AG04450 (cell line): ENCODE measurements at regions of chr2 and their contacts with region 1.

Region 1: GRCh38 chr2:105255979-105256738 is 14.6 kb downstream of the GPR45 start:
- DNase-seq: no peak
- H3K4me3 ChIP-seq: no peak overlapping the region
- H3K27ac ChIP-seq: no peak overlapping the region
- H3K27me3 ChIP-seq: no peaks in the 10 kb centered on the region
- CTCF ChIP-seq: no peak

Region 2: DNA sequence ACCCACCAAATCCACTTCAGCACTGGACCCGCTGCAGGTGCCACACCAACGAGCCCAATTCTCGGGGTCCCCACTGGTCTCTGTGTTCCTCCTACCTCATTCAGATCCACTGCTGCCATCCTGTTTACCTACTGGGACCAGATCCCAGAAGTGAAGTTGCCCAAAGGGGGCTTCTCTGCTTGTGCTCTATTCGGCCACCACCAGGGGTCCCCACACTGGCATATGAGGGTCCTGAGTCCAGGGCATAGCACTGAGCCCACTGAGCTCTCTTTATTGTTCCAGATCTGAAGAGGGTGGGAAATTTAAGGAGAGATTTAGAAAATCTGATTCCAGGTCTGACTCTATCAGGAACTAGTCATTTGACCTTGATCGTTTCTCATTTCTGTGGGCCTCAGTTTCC is 12.2 kb before region 1 on chr2:
- CTCF ChIA-PET with region 1: interaction called, 18 read pairs
- POLR2A ChIA-PET with region 1: no interaction called
- DNase-seq: no peak
- H3K4me3 ChIP-seq: no peak overlapping the region
- H3K27ac ChIP-seq: no peak overlapping the region
- H3K27me3 ChIP-seq: peaks cover 11% of the 10 kb centered on the region
- CTCF ChIP-seq: peak; percentile 42

Region 3: GRCh38 chr2:105301646-105302045 is 45.5 kb after region 1 on chr2:
- CTCF ChIA-PET with region 1: no interaction called
- POLR2A ChIA-PET with region 1: no interaction called
- DNase-seq: no peak
- H3K4me3 ChIP-seq: no peak overlapping the region
- H3K27ac ChIP-seq: no peak overlapping the region
- H3K27me3 ChIP-seq: no peaks in the 10 kb centered on the region
- CTCF ChIP-seq: no peak